Activated CD8-positive, alpha-beta memory T cell treated with anti-CD3 and anti-CD28 coated beads, Interleukin-2, amount 10 ng/mL, durations not matched to agents 7 days and 5 days (primary cell): ENCODE measurements at regions of chr22 and their contacts with region 1.

Region 1: DNA sequence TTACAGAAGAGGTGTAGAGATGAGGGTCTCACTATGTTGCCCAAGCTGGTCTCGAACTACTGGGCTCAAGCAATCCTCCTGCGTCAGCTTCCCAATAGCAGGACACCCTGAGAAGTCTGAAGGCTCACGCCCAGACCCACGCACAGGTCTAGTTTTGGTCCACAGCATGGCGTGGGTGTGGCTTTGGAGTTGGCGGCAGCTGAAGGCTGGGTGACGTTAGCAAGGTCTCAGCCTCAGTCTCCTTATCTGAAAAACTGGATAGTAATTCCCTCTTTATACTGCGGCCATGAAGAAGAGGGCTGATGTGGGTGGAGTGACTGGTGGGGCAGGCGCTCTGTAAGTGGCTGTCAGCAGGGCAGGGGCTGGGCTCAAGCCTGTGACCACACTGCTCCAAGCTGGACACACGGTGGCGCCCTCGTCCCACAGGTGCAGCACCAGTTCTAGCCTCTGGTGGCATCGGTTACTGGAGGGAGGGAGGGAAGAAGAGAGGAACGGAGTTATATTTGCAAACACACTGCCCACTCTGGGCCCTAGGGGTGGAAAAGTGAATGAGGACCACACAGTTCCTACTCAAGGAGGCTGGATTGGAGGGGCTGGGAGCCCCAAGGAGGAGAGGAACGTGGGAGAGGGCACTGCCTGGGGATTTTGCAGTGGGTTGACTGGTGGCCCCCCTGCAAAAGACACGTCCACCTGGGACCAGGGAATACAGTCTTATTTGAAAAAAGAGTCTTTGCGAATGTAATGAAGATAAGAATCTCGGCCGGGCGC is 19.6 kb upstream of the CARD10 start:
- DNase-seq: peak; percentile 95
- ATAC-seq: peak; percentile 98
- H3K4me3 Mint-ChIP-seq: no peak overlapping the region
- H3K27ac Mint-ChIP-seq: peak overlapping the region; percentile 52
- H3K4me1 Mint-ChIP-seq: peaks cover 51% of the 10 kb centered on the region
- H3K27me3 Mint-ChIP-seq: peaks cover 19% of the 10 kb centered on the region

Region 2: GRCh38 chr22:37439347-37439746 is 99.4 kb before region 1 on chr22:
- CTCF ChIA-PET with region 1: no interaction called
- DNase-seq: no peak
- ATAC-seq: no peak
- H3K4me3 Mint-ChIP-seq: no peak overlapping the region
- H3K27ac Mint-ChIP-seq: no peak overlapping the region
- H3K4me1 Mint-ChIP-seq: peaks cover 6% of the 10 kb centered on the region
- H3K27me3 Mint-ChIP-seq: peaks cover 12% of the 10 kb centered on the region

Region 3: DNA sequence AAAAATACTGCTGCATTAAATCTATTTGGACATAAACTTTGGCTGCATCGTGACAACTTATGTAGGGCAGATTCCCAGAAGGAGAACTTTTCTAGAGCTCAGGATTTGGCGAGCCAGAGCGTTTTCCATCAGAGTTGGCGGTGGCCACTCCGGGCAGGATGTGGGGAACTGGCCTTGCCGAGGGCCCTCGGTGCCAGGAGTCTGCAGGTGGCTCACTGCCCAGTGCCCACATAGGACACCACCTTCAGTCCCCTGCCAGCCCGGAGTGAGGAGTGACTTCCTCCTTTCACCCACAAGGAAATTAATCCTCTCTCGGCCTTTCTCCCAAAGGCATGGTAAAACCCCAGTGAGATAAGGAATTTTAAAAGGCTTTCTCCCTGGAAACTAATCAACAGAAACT is 42.7 kb after region 1 on chr22:
- CTCF ChIA-PET with region 1: interaction called, 661 read pairs
- DNase-seq: no peak
- ATAC-seq: no peak
- H3K4me3 Mint-ChIP-seq: no peak overlapping the region
- H3K27ac Mint-ChIP-seq: no peak overlapping the region
- H3K4me1 Mint-ChIP-seq: peaks cover 16% of the 10 kb centered on the region
- H3K27me3 Mint-ChIP-seq: peaks cover 27% of the 10 kb centered on the region

Region 4: GRCh38 chr22:37588546-37589215 is 49.9 kb after region 1 on chr22:
- CTCF ChIA-PET with region 1: interaction called, 169 read pairs
- DNase-seq: no peak
- ATAC-seq: no peak
- H3K4me3 Mint-ChIP-seq: no peak overlapping the region
- H3K27ac Mint-ChIP-seq: no peak overlapping the region
- H3K4me1 Mint-ChIP-seq: peaks cover 15% of the 10 kb centered on the region
- H3K27me3 Mint-ChIP-seq: peaks cover 20% of the 10 kb centered on the region